K562 (cell line): ENCODE measurements at regions of chr15 and their contacts with region 1.

Region 1: GRCh38 chr15:64046347-64047153 is at the start of gene DAPK2:
- DNase-seq: peak; percentile 80 to 96 (median 95)
- ATAC-seq: peak; percentile 98
- H3K4me3 ChIP-seq: peak within 1 kb of the TSS; percentile 43
- H3K27ac ChIP-seq: peak within 1 kb of the TSS; percentile 51; the same call in 1 of the 3 replicates
- H3K4me1 ChIP-seq: peaks cover 4 to 28% of the 10 kb centered on the region in 2 experiments; a peak in 3 of 5 replicates
- H3K27me3 ChIP-seq: no peaks in the 10 kb centered on the region
- CTCF ChIP-seq: peak; percentile 76 to 91 (median 84)
- EP300 ChIP-seq: no peak
- POLR2A ChIP-seq: no peak
- RAD21 ChIP-seq: peak; percentile 89 to 90
- polyA plus RNA-seq, gene DAPK2: 0.14 to 0.20 TPM

Region 2: GRCh38 chr15:63818191-63818590 is 228.4 kb before region 1 on chr15:
- CTCF ChIA-PET with region 1: no interaction called
- POLR2A ChIA-PET with region 1: no interaction called
- in situ Hi-C with region 1: loop called (anchors 5 kb)
- intact Hi-C with region 1: no loop called
- DNase-seq: peak; percentile 32 to 85 (median 58)
- ATAC-seq: peak; percentile 93
- H3K4me3 ChIP-seq: no peak overlapping the region
- H3K27ac ChIP-seq: peak overlapping the region; percentile 58
- H3K4me1 ChIP-seq: peaks cover 12 to 23% of the 10 kb centered on the region in 2 experiments
- H3K27me3 ChIP-seq: no peaks in the 10 kb centered on the region
- CTCF ChIP-seq: peak; percentile 31 to 55 (median 42); a peak in 3 of 6 replicates
- EP300 ChIP-seq: peak; percentile 49; the same call in 1 of the 2 replicates
- POLR2A ChIP-seq: no peak
- RAD21 ChIP-seq: 0 out of 4 replicates have a peak, but pooled peaks have one; percentile 9 to 11

Region 3: DNA sequence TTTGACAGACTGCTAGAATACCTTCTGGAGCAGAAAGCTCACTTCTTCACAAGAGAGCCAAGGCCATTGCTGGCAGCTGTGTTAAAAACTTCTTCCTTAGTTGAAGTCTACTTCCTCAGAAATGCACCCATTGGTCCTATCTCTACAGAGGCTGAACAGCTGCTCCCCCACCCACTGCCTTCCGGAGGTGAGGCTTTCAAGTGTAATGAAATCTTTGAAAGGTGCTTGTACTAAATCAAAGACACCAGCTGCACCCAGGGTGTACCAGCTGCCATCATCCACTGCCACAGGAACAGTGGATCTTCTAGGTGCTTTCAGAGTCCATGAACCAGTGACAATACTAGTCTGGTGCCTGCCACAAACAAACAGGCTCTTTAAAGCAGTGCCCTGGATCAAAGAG is 186.4 kb before region 1 on chr15:
- CTCF ChIA-PET with region 1: no interaction called
- POLR2A ChIA-PET with region 1: no interaction called
- in situ Hi-C with region 1: no loop called
- intact Hi-C with region 1: no loop called
- DNase-seq: peak in 3 of 4 experiments; percentile 37 to 59 (median 50)
- ATAC-seq: peak; percentile 78
- H3K4me3 ChIP-seq: no peak overlapping the region
- H3K27ac ChIP-seq: no peak overlapping the region
- H3K4me1 ChIP-seq: peaks cover 10 to 20% of the 10 kb centered on the region in 2 experiments; a peak in 4 of 5 replicates
- H3K27me3 ChIP-seq: no peaks in the 10 kb centered on the region
- CTCF ChIP-seq: no peak
- EP300 ChIP-seq: no peak
- POLR2A ChIP-seq: no peak
- RAD21 ChIP-seq: no peak

Region 4: DNA sequence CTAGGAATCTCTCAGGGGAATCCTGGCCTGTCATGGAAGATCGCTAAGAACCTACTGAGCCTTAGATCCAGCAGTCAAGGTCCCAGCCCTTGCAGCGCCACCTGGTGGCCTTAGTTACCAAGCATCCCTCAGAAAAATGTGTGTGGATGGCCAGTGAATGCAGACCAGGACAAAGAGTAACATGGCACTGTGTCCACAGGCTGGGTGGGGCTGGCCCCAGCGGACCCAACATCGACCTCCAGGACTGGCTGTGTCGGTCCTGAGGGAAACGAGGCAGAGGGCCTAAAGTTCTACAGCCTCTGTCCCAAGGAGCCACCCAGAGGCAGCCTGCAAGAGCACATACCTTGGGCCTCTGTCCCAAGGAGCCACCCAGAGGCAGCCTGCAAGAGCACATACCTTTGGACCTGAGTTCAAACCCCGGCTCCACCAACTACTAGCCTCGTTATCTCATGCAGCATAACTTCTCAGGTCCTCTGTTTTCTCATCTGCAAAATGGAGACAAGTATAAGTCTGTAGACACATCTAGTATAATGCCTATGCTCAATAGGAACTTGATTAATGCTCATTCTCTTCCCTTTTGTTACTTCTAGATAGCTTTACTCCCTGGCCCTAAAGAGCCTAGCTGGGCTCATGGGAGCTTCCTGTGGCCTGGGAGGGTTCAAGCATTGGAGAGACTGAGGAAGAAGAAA is 155.3 kb before region 1 on chr15:
- CTCF ChIA-PET with region 1: no interaction called
- POLR2A ChIA-PET with region 1: interaction called, 4 read pairs
- in situ Hi-C with region 1: no loop called
- intact Hi-C with region 1: loop called (anchors 2 kb)
- DNase-seq: peak; percentile 75 to 93 (median 80)
- ATAC-seq: peak; percentile 72
- H3K4me3 ChIP-seq: no peak overlapping the region
- H3K27ac ChIP-seq: peak overlapping the region; percentile 40; the same call in 2 of the 3 replicates
- H3K4me1 ChIP-seq: peaks cover 51 to 57% of the 10 kb centered on the region in 2 experiments
- H3K27me3 ChIP-seq: no peaks in the 10 kb centered on the region
- CTCF ChIP-seq: peak; percentile 82 to 97 (median 85)
- EP300 ChIP-seq: peak; percentile 7; the same call in 1 of the 2 replicates
- POLR2A ChIP-seq: no peak
- RAD21 ChIP-seq: peak; percentile 87 to 93

Region 5: DNA sequence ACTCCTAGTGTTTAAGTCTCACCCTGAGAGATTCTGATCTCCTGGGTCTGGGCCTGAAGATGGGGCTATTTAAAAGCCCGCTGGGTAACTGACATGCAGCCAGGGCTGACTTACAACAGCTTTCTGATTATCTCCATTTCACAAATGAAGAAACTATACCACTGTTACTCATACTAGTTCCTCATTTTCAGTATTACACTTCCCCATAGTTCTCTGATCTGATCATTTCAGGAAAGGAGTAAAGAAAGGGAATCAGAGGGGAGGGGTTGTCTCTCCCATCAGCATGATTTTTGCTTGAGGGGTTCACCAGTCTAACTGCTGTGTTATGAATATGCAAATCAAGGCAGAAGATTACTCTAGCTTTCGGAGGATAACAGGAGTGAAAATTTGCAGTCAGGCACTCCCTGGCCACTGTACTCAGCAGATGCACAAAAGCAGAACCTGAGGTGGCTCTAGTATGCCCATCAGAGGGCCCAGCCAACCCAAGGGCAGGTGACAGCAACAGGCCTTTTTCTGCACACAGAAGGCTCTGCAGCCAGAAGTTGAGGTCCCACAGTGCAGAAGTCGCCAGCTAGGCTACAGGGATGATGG is 59.7 kb before region 1 on chr15:
- CTCF ChIA-PET with region 1: no interaction called
- POLR2A ChIA-PET with region 1: no interaction called
- in situ Hi-C with region 1: no loop called
- intact Hi-C with region 1: loop called (anchors 5 kb)
- DNase-seq: peak in 1 of 4 experiments; percentile 47
- ATAC-seq: peak; percentile 58
- H3K4me3 ChIP-seq: no peak overlapping the region
- H3K27ac ChIP-seq: peak overlapping the region; percentile 37; the same call in 1 of the 3 replicates
- H3K4me1 ChIP-seq: peaks cover 17 to 32% of the 10 kb centered on the region in 2 experiments
- H3K27me3 ChIP-seq: no peaks in the 10 kb centered on the region
- CTCF ChIP-seq: peak in 1 of 3 experiments; percentile 39; a peak in 2 of 6 replicates
- EP300 ChIP-seq: peak; percentile 59
- POLR2A ChIP-seq: no peak
- RAD21 ChIP-seq: peak in 1 of 2 experiments; percentile 24; a peak in 1 of 4 replicates

Region 6: GRCh38 chr15:64197425-64197824 is 150.9 kb after region 1 on chr15:
- CTCF ChIA-PET with region 1: no interaction called
- POLR2A ChIA-PET with region 1: no interaction called
- in situ Hi-C with region 1: no loop called
- intact Hi-C with region 1: no loop called
- DNase-seq: no peak
- ATAC-seq: no peak
- H3K4me3 ChIP-seq: no peak overlapping the region
- H3K27ac ChIP-seq: no peak overlapping the region
- H3K4me1 ChIP-seq: peaks cover 8 to 10% of the 10 kb centered on the region in 2 experiments; a peak in 4 of 5 replicates
- H3K27me3 ChIP-seq: no peaks in the 10 kb centered on the region
- CTCF ChIP-seq: no peak
- EP300 ChIP-seq: no peak
- POLR2A ChIP-seq: no peak
- RAD21 ChIP-seq: no peak